ENCODE measurements at regions of chr16 and their contacts with region 1.

Region 1: DNA sequence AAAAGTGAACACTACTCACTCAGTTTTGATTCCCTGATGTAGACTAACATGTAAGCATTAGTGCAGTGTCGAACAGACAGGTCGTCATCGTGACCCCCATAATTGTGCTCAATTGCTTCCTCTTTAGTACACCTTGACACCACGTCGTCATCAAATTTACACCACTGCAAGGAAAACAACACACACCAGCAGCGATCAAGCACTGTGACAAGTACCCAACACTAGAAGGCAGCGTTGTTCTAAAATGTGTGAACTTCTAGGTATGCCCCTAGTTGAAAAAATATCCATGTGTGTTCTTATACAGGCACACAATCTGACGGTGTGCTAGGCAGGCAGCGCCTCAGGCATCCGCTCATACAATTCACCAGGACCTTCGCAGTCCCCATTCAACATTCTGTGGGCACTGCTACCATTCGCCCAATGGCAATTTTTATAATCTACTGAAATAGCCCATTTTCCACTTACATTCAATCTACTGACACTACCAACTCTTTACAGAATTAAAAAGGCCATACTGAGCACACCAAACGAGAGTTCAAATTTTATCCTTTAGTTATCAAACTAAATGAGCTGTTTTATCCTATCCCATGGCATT is 23.1 kb downstream of the LITAFD start:
- DNase-seq: no peak
- H3K4me3 Mint-ChIP-seq: no peak overlapping the region
- H3K27ac Mint-ChIP-seq: no peak overlapping the region
- H3K4me1 Mint-ChIP-seq: peaks cover 5% of the 10 kb centered on the region
- H3K27me3 Mint-ChIP-seq: no peaks in the 10 kb centered on the region

Region 2: DNA sequence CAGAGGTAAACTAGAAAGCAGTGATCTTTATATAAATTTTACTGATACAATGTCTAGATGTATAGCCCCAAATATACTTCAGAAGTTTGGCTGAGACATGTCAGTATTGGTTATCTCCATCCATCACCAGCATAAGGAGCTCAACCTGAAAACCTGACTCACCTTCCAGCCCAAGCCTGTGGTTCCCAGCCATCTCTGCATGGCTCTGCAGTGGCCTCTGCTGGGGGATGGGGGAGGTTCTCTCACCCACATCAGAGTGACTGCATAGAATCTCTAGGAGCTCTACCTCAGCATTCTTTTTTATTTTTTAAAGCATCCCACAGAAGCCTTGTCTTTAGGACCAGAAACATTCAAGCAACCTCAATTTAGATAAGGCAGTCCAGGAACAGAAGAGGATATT is 31.2 kb after region 1 on chr16:
- intact Hi-C with region 1: loop called (anchors 1 kb)
- DNase-seq: peak; percentile 62
- H3K4me3 Mint-ChIP-seq: no peak overlapping the region
- H3K27ac Mint-ChIP-seq: peak overlapping the region; percentile 36
- H3K4me1 Mint-ChIP-seq: peaks cover 41% of the 10 kb centered on the region
- H3K27me3 Mint-ChIP-seq: no peaks in the 10 kb centered on the region

Region 3: GRCh38 chr16:9008601-9009260 is 103.5 kb after region 1 on chr16:
- intact Hi-C with region 1: loop called (anchors 1 kb)
- DNase-seq: peak; percentile 49
- H3K4me3 Mint-ChIP-seq: no peak overlapping the region
- H3K27ac Mint-ChIP-seq: no peak overlapping the region
- H3K4me1 Mint-ChIP-seq: peaks cover 2% of the 10 kb centered on the region
- H3K27me3 Mint-ChIP-seq: peaks cover 9% of the 10 kb centered on the region

Measured in activated T-helper 2 cell treated with anti-CD3 and anti-CD28 coated beads, Interferon-gamma antibody, Interleukin-2, Interleukin-4, amounts not matched to agents 10 μg/mL and 5 μg/mL and 100 μg/mL, durations not matched to agents 14 hours and 24 hours and 36 hours (primary cell).